Right cardiac atrium (tissue), 5 donors: ENCODE measurements at regions of chr2 and their contacts with region 1.

Region 1: GRCh38 chr2:61694312-61695274 is 156.4 kb upstream of the XPO1 start:
- DNase-seq: peak; percentile 96 to 99 (median 98)
- ATAC-seq: peak; percentile 100
- H3K4me3 ChIP-seq: peak overlapping the region; percentile 90
- H3K27ac ChIP-seq: peak overlapping the region; percentile 90
- H3K4me1 ChIP-seq: no peaks in the 10 kb centered on the region
- H3K27me3 ChIP-seq: no peaks in the 10 kb centered on the region

Region 2: GRCh38 chr2:61750624-61751023 is 56.0 kb after region 1 on chr2:
- intact Hi-C with region 1: no loop called
- DNase-seq: no peak
- ATAC-seq: peak; percentile 25 to 65
- H3K4me3 ChIP-seq: no peak overlapping the region
- H3K27ac ChIP-seq: no peak overlapping the region
- H3K4me1 ChIP-seq: no peaks in the 10 kb centered on the region
- H3K27me3 ChIP-seq: no peaks in the 10 kb centered on the region

Region 3: GRCh38 chr2:61764035-61764800 is 69.6 kb after region 1 on chr2:
- intact Hi-C with region 1: loop called in 1 of 4 experiments (anchors 5 kb)
- DNase-seq: peak; percentile 98 to 99 (median 99)
- ATAC-seq: peak; percentile 100
- H3K4me3 ChIP-seq: peak overlapping the region; percentile 73
- H3K27ac ChIP-seq: peak overlapping the region; percentile 99
- H3K4me1 ChIP-seq: no peaks in the 10 kb centered on the region
- H3K27me3 ChIP-seq: no peaks in the 10 kb centered on the region

Region 4: DNA sequence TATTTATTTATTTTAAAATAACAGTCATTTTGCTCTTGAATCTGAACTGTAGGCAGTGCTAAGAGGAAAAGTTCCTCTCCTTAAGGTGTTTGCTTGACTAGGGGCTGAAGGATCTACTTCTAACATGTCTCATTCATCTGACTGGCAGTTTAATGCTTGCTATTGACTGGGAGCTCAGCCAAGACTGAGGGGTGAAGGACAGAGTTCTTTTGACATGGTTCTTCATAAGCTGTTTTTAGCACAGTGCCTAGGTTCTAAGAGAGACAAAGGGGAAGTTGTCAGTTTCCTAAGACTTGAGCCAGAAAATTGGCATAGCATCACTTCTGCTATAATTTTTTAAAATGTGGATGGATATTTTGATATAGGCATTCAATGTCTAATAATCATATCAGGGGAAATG is 283.9 kb after region 1 on chr2:
- intact Hi-C with region 1: no loop called
- DNase-seq: peak in 1 of 3 donors; percentile 18
- ATAC-seq: peak; percentile 79 to 88
- H3K4me3 ChIP-seq: no peak overlapping the region
- H3K27ac ChIP-seq: no peak overlapping the region
- H3K4me1 ChIP-seq: peaks cover 2% of the 10 kb centered on the region
- H3K27me3 ChIP-seq: no peaks in the 10 kb centered on the region

Region 5: GRCh38 chr2:62270728-62271127 is 576.1 kb after region 1 on chr2:
- intact Hi-C with region 1: no loop called
- DNase-seq: peak; percentile 70 to 88 (median 87)
- ATAC-seq: peak; percentile 26 to 36
- H3K4me3 ChIP-seq: no peak overlapping the region
- H3K27ac ChIP-seq: no peak overlapping the region
- H3K4me1 ChIP-seq: no peaks in the 10 kb centered on the region
- H3K27me3 ChIP-seq: no peaks in the 10 kb centered on the region